AG04450 (cell line): ENCODE measurements at regions of chr1 and their contacts with region 1.

Region 1: GRCh38 chr1:149886396-149887195 is 12.8 kb upstream of the BOLA1 start:
- DNase-seq: peak; percentile 99
- H3K4me3 ChIP-seq: peak overlapping the region; percentile 77
- H3K27ac ChIP-seq: peak overlapping the region; percentile 99
- H3K27me3 ChIP-seq: no peaks in the 10 kb centered on the region
- CTCF ChIP-seq: no peak

Region 2: DNA sequence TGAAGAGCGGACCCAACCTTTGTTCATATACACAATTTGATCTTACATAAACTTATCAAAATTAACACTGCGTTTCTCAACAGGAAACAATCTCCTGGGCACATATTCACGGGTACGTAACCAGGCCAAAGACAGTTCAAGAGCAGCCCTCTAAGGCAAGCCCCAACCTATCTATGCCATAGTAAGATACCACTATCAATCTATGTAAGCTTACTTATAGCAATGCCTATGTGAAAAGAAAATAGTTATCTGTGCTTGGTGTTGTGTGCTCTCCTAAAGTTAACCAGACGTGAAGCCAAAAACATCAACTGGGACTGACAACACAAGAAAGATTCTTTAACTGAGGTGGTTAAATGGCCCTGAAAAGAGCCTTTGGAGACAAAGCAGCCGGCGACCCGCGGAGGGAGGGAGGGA is 36.6 kb before region 1 on chr1:
- CTCF ChIA-PET with region 1: interaction called, 3 read pairs
- POLR2A ChIA-PET with region 1: interaction called, 38 read pairs
- DNase-seq: no peak
- H3K4me3 ChIP-seq: peak overlapping the region; percentile 71
- H3K27ac ChIP-seq: peak overlapping the region; percentile 39
- H3K27me3 ChIP-seq: no peaks in the 10 kb centered on the region
- CTCF ChIP-seq: no peak

Region 3: GRCh38 chr1:149927503-149928387 is 41.1 kb after region 1 on chr1 and contains the start of gene SF3B4:
- CTCF ChIA-PET with region 1: interaction called, 3 read pairs
- POLR2A ChIA-PET with region 1: interaction called, 18 read pairs
- DNase-seq: peak; percentile 68
- H3K4me3 ChIP-seq: peak within 1 kb of the TSS; percentile 91
- H3K27ac ChIP-seq: peak within 1 kb of the TSS; percentile 81
- H3K27me3 ChIP-seq: no peaks in the 10 kb centered on the region
- CTCF ChIP-seq: no peak
- polyA plus RNA-seq, gene SF3B4: 47.6 and 52.7 TPM in 2 replicates

Region 4: DNA sequence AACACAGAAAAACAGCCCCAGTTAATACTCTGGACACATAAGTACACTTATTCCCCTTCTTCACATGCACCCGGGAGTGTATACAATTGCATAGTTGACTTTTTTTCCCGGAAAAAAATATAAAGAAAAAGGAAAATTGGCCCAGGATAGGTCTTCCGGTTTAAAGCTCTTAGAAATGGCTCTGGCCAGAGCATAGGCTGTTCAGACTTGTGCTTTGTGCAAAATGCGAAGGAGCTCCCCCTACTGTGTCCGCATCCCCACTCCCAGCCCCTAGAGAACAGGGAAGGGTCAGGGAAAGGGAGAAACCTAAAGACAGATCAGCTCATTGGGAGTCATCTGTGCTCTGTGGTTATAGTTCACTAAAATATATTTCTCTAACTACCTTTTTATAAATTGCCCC is 55.6 kb after region 1 on chr1:
- CTCF ChIA-PET with region 1: no interaction called
- POLR2A ChIA-PET with region 1: interaction called, 20 read pairs
- DNase-seq: no peak
- H3K4me3 ChIP-seq: no peak overlapping the region
- H3K27ac ChIP-seq: no peak overlapping the region
- H3K27me3 ChIP-seq: no peaks in the 10 kb centered on the region
- CTCF ChIP-seq: peak; percentile 56

Region 5: DNA sequence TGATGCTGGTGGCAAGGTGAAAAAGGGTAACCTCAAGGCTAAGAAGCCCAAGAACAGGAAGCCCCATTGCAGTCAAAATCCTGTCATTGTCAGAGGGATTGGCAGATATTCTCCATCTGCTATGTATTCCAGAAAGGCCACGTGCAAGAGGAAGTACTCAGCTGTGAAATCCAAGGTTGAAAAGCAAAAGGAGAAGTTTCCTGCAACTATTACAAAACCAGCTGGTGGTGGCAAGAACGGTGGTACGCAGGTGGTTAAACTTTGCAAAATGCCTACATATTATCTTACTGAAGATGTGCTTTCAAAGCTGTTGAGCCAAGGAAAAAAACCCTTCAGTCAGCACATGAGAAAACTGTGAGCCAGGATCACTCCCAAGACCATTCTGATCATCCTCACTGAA is 167.3 kb after region 1 on chr1:
- CTCF ChIA-PET with region 1: interaction called, 5 read pairs
- POLR2A ChIA-PET with region 1: interaction called, 12 read pairs
- DNase-seq: no peak
- H3K4me3 ChIP-seq: no peak overlapping the region
- H3K27ac ChIP-seq: no peak overlapping the region
- H3K27me3 ChIP-seq: no peaks in the 10 kb centered on the region
- CTCF ChIP-seq: no peak